GM12878 (cell line): ENCODE measurements at regions of chr14 and their contacts with region 1.

Region 1: GRCh38 chr14:73771848-73772638 is 57.9 kb upstream of the PNMA1 start:
- DNase-seq: peak; percentile 85
- ATAC-seq: peak; percentile 76
- H3K4me3 ChIP-seq: peak overlapping the region; percentile 65; the same call in 1 of the 2 replicates
- H3K27ac ChIP-seq: peak overlapping the region; percentile 93
- H3K4me1 ChIP-seq: peaks cover 71% of the 10 kb centered on the region
- H3K27me3 ChIP-seq: no peaks in the 10 kb centered on the region
- CTCF ChIP-seq: peak in 2 of 3 experiments; percentile 0 to 16; a peak in 1 of 6 replicates
- EP300 ChIP-seq: peak; percentile 73 to 81; a peak in 3 of 4 replicates
- POLR2A ChIP-seq: peak; percentile 82
- RAD21 ChIP-seq: no peak

Region 2: GRCh38 chr14:73741386-73741875 is 30.6 kb before region 1 on chr14:
- CTCF ChIA-PET with region 1: interaction called, 5 read pairs
- POLR2A ChIA-PET with region 1: interaction called, 16 read pairs
- RAD21 ChIA-PET with region 1: interaction called, 22 read pairs
- SMC1A ChIA-PET with region 1: interaction called, 9 read pairs
- in situ Hi-C with region 1: no loop called
- intact Hi-C with region 1: no loop called
- DNase-seq: no peak
- ATAC-seq: peak; percentile 60
- H3K4me3 ChIP-seq: peak overlapping the region; percentile 55
- H3K27ac ChIP-seq: peak overlapping the region; percentile 81
- H3K4me1 ChIP-seq: peaks cover 55% of the 10 kb centered on the region
- H3K27me3 ChIP-seq: no peaks in the 10 kb centered on the region
- CTCF ChIP-seq: no peak
- EP300 ChIP-seq: no peak
- POLR2A ChIP-seq: no peak
- RAD21 ChIP-seq: no peak

Region 3: DNA sequence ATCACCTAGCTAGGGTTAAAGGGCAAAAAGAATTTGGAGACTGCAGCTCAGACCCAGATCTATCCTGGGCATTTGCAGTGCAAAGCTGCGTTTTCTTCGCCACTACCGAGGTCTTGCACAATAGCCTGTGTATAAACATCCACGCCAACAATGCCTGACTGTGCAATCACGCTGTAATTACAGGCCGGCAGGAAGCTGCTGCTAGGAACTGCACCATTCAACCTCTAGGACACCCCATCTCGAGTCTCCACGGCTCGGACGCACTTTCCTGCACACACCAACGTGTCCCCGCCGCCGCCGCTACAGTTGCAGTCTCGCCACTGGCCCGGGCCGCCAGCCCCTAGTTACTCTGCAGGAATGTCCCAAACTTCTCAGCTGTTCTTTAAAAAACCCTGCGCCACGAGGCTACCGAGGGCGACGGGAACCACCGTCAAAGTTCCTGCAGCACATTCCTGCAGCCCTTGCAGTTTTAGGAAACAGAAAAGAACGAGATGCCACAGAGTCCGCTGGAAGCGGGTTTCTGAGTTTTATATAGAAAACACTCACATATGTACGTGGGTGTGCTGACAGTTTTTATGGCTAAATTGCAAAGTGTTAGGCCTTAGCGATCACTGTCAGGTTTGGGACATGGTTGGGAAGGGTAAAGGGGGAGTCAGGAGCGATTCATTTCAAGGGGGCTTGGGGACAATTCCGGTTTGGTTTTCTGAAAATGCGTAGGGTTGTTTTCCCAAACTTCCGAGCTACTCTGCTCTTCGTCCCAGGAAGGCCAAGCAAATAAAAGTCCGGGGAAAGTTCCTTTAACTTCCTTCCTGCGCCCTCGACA is 14.0 kb after region 1 on chr14:
- CTCF ChIA-PET with region 1: interaction called, 91 read pairs
- POLR2A ChIA-PET with region 1: interaction called, 260 read pairs
- RAD21 ChIA-PET with region 1: interaction called, 710 read pairs
- SMC1A ChIA-PET with region 1: interaction called, 280 read pairs
- in situ Hi-C with region 1: no loop called
- intact Hi-C with region 1: loop called (anchors 1 kb)
- DNase-seq: no peak
- ATAC-seq: peak; percentile 75
- H3K4me3 ChIP-seq: peak overlapping the region; percentile 97
- H3K27ac ChIP-seq: peak overlapping the region; percentile 94
- H3K4me1 ChIP-seq: peaks cover 41% of the 10 kb centered on the region
- H3K27me3 ChIP-seq: no peaks in the 10 kb centered on the region
- CTCF ChIP-seq: no peak
- EP300 ChIP-seq: no peak
- POLR2A ChIP-seq: peak; percentile 81
- RAD21 ChIP-seq: no peak

Region 4: GRCh38 chr14:73795972-73796371 is 23.9 kb after region 1 on chr14:
- CTCF ChIA-PET with region 1: no interaction called
- POLR2A ChIA-PET with region 1: interaction called, 11 read pairs
- RAD21 ChIA-PET with region 1: interaction called, 3 read pairs
- SMC1A ChIA-PET with region 1: interaction called, 10 read pairs
- in situ Hi-C with region 1: no loop called
- intact Hi-C with region 1: no loop called
- DNase-seq: no peak
- ATAC-seq: no peak
- H3K4me3 ChIP-seq: no peak overlapping the region
- H3K27ac ChIP-seq: no peak overlapping the region
- H3K4me1 ChIP-seq: peaks cover 15% of the 10 kb centered on the region
- H3K27me3 ChIP-seq: no peaks in the 10 kb centered on the region
- CTCF ChIP-seq: no peak
- EP300 ChIP-seq: no peak
- POLR2A ChIP-seq: no peak
- RAD21 ChIP-seq: no peak

Region 5: GRCh38 chr14:73943083-73943482 is 171.0 kb after region 1 on chr14:
- CTCF ChIA-PET with region 1: no interaction called
- POLR2A ChIA-PET with region 1: no interaction called
- RAD21 ChIA-PET with region 1: no interaction called
- SMC1A ChIA-PET with region 1: no interaction called
- in situ Hi-C with region 1: no loop called
- intact Hi-C with region 1: no loop called
- DNase-seq: no peak
- ATAC-seq: no peak
- H3K4me3 ChIP-seq: no peak overlapping the region
- H3K27ac ChIP-seq: no peak overlapping the region
- H3K4me1 ChIP-seq: peaks cover 9% of the 10 kb centered on the region
- H3K27me3 ChIP-seq: no peaks in the 10 kb centered on the region
- CTCF ChIP-seq: no peak
- EP300 ChIP-seq: no peak
- POLR2A ChIP-seq: no peak
- RAD21 ChIP-seq: no peak